ENCODE measurements at regions of chr9 and their contacts with region 1.

Region 1: GRCh38 chr9:129088650-129089049 is 7.7 kb downstream of the DOLPP1 start:
- DNase-seq: no peak
- H3K4me3 ChIP-seq: no peak overlapping the region
- H3K27ac ChIP-seq: no peak overlapping the region
- H3K4me1 ChIP-seq: no peaks in the 10 kb centered on the region
- H3K27me3 ChIP-seq: no peaks in the 10 kb centered on the region
- CTCF ChIP-seq: no peak
- POLR2A ChIP-seq: no peak

Region 2: GRCh38 chr9:129068990-129069861 is 19.4 kb before region 1 on chr9:
- CTCF ChIA-PET with region 1: no interaction called
- POLR2A ChIA-PET with region 1: no interaction called
- dilution Hi-C with region 1: no loop called
- intact Hi-C with region 1: loop called (anchors 1 kb)
- DNase-seq: no peak
- H3K4me3 ChIP-seq: no peak overlapping the region
- H3K27ac ChIP-seq: no peak overlapping the region
- H3K4me1 ChIP-seq: no peaks in the 10 kb centered on the region
- H3K27me3 ChIP-seq: no peaks in the 10 kb centered on the region
- CTCF ChIP-seq: no peak
- POLR2A ChIP-seq: no peak

Region 3: GRCh38 chr9:129131300-129132145 is 42.9 kb after region 1 on chr9:
- CTCF ChIA-PET with region 1: no interaction called
- POLR2A ChIA-PET with region 1: no interaction called
- dilution Hi-C with region 1: no loop called
- intact Hi-C with region 1: no loop called
- DNase-seq: peak; percentile 65
- H3K4me3 ChIP-seq: no peak overlapping the region
- H3K27ac ChIP-seq: no peak overlapping the region
- H3K4me1 ChIP-seq: peaks cover 12% of the 10 kb centered on the region
- H3K27me3 ChIP-seq: no peaks in the 10 kb centered on the region
- CTCF ChIP-seq: peak; percentile 96 to 99
- POLR2A ChIP-seq: no peak